Caco-2 (cell line): ENCODE measurements at regions of chr11 and their contacts with region 1.

Region 1: GRCh38 chr11:83241291-83241946 is 44.7 kb downstream of the CCDC90B start:
- DNase-seq: peak; percentile 86
- H3K4me3 ChIP-seq: no peak overlapping the region
- H3K4me3 Mint-ChIP-seq: no peak overlapping the region
- H3K27ac Mint-ChIP-seq: no peak overlapping the region
- H3K4me1 ChIP-seq: peaks cover 9% of the 10 kb centered on the region
- H3K4me1 Mint-ChIP-seq: peaks cover 21% of the 10 kb centered on the region
- H3K27me3 ChIP-seq: no peaks in the 10 kb centered on the region
- H3K27me3 Mint-ChIP-seq: no peaks in the 10 kb centered on the region
- CTCF ChIP-seq: peak; percentile 86 to 92

Region 2: GRCh38 chr11:82631722-82632630 is 609.4 kb before region 1 on chr11:
- CTCF ChIA-PET with region 1: no interaction called
- POLR2A ChIA-PET with region 1: no interaction called
- intact Hi-C with region 1: no loop called
- DNase-seq: no peak
- H3K4me3 ChIP-seq: no peak overlapping the region
- H3K4me3 Mint-ChIP-seq: no peak overlapping the region
- H3K27ac Mint-ChIP-seq: no peak overlapping the region
- H3K4me1 ChIP-seq: no peaks in the 10 kb centered on the region
- H3K4me1 Mint-ChIP-seq: no peaks in the 10 kb centered on the region
- H3K27me3 ChIP-seq: no peaks in the 10 kb centered on the region
- H3K27me3 Mint-ChIP-seq: peaks cover 5% of the 10 kb centered on the region
- CTCF ChIP-seq: no peak

Region 3: GRCh38 chr11:83193315-83194280 is 47.8 kb before region 1 on chr11 and contains the start of gene ANKRD42:
- CTCF ChIA-PET with region 1: no interaction called
- POLR2A ChIA-PET with region 1: no interaction called
- intact Hi-C with region 1: loop called (anchors 2 kb)
- DNase-seq: peak; percentile 96 to 97
- H3K4me3 ChIP-seq: peak within 1 kb of the TSS; percentile 77
- H3K4me3 Mint-ChIP-seq: peak within 1 kb of the TSS; percentile 80
- H3K27ac Mint-ChIP-seq: peak within 1 kb of the TSS; percentile 89
- H3K4me1 ChIP-seq: peaks cover 7% of the 10 kb centered on the region; the same call in 1 of the 2 replicates
- H3K4me1 Mint-ChIP-seq: peaks cover 30% of the 10 kb centered on the region
- H3K27me3 ChIP-seq: no peaks in the 10 kb centered on the region
- H3K27me3 Mint-ChIP-seq: no peaks in the 10 kb centered on the region
- CTCF ChIP-seq: peak in 1 of 2 experiments; percentile 4
- total RNA-seq, gene ANKRD42: 8.3 and 9.0 TPM in 2 replicates

Region 4: DNA sequence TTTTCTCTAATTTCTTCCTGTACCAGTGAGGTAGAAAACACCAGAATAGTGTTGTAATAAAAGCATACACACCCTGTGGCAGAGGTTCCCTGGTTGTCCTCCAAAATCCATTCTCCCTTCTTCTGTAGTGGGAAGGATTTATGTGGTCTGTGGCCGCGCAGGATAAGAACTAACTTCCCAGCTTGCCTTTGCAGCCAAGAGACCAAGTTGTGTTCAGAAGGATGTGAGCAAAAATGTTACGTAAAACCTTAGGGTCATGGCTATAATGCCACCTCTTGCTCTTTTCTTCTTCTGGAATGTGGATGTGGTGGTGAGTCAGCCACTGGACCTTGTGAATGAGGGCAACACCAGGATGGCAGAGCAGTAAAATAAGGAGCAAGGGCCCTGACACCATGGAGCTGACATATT is 16.3 kb after region 1 on chr11:
- CTCF ChIA-PET with region 1: no interaction called
- POLR2A ChIA-PET with region 1: no interaction called
- intact Hi-C with region 1: loop called (anchors 1 kb)
- DNase-seq: peak in 1 of 2 experiments; percentile 63
- H3K4me3 ChIP-seq: no peak overlapping the region
- H3K4me3 Mint-ChIP-seq: no peak overlapping the region
- H3K27ac Mint-ChIP-seq: peak overlapping the region; percentile 87
- H3K4me1 ChIP-seq: peaks cover 43% of the 10 kb centered on the region
- H3K4me1 Mint-ChIP-seq: peaks cover 32% of the 10 kb centered on the region
- H3K27me3 ChIP-seq: no peaks in the 10 kb centered on the region
- H3K27me3 Mint-ChIP-seq: no peaks in the 10 kb centered on the region
- CTCF ChIP-seq: no peak

Region 5: GRCh38 chr11:83272627-83273026 is 31.2 kb after region 1 on chr11:
- CTCF ChIA-PET with region 1: no interaction called
- POLR2A ChIA-PET with region 1: no interaction called
- intact Hi-C with region 1: loop called (anchors 1 kb)
- DNase-seq: no peak
- H3K4me3 ChIP-seq: no peak overlapping the region
- H3K4me3 Mint-ChIP-seq: no peak overlapping the region
- H3K27ac Mint-ChIP-seq: no peak overlapping the region
- H3K4me1 ChIP-seq: peaks cover 21% of the 10 kb centered on the region
- H3K4me1 Mint-ChIP-seq: peaks cover 27% of the 10 kb centered on the region
- H3K27me3 ChIP-seq: no peaks in the 10 kb centered on the region
- H3K27me3 Mint-ChIP-seq: no peaks in the 10 kb centered on the region
- CTCF ChIP-seq: no peak

Region 6: DNA sequence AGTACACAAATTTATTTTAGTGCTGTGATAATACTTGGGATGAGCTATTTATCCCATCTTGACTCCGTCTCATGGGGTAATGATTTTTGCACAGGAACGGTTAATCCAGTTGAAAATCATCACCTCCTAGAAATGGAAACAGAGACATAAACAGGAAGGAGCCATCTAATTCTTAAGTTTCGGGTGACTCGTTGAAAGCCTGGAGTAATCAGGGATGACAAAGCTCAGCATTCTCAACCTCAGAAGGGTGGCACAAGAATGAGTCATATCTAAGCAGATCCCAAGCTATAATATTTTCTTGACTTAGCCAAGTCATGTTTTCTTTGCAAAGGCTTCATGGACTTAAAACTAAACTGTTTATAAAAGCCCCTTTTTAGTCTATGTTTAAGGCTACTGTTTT is 325.5 kb after region 1 on chr11:
- CTCF ChIA-PET with region 1: no interaction called
- POLR2A ChIA-PET with region 1: no interaction called
- intact Hi-C with region 1: no loop called
- DNase-seq: no peak
- H3K4me3 ChIP-seq: no peak overlapping the region
- H3K4me3 Mint-ChIP-seq: no peak overlapping the region
- H3K27ac Mint-ChIP-seq: no peak overlapping the region
- H3K4me1 ChIP-seq: peaks cover 5% of the 10 kb centered on the region; the same call in 1 of the 2 replicates
- H3K4me1 Mint-ChIP-seq: peaks cover 1% of the 10 kb centered on the region
- H3K27me3 ChIP-seq: no peaks in the 10 kb centered on the region
- H3K27me3 Mint-ChIP-seq: peaks cover 2% of the 10 kb centered on the region
- CTCF ChIP-seq: no peak